Transverse colon (tissue), 4 donors: ENCODE measurements at regions of chrX and their contacts with region 1.

Region 1: DNA sequence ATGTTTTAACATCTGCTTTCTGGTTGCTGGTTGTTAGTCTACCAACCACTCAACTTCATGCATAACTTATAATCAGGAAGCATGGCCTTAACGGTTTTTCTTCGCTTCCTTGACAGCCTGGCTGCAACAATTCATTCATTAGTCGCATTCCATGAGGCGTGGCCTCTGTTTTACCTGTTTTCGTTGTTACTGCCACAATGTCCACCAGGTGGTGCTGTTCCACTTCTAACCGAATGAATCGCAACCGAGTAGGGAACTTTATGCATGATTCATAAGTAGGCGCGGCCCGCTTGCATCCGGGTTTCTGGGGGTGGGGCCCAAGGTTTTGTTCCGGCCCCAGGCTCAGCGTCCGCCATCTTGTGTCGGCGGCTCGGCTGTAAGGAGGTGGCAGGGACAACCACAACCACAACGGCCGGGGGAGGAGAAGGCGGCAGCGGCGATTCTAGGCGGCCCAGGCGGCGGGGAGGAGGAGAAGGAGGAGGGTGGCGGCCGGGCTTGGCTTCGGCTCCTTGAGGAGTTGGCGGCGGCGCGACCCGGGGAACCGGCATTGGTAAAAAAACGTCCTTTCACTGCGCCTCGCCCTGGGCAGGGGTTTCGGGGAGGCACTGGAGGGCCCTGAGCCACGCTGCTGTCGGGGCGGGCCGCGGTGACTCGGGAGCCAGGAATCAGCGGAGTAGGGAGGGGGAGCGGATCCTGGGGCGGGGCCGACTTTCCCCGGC is at the start of gene UBA1:
- DNase-seq: peak; percentile 98
- H3K4me3 ChIP-seq: peak within 1 kb of the TSS; percentile 80 to 90 (median 84)
- H3K27ac ChIP-seq: peak within 1 kb of the TSS; percentile 93 to 99 (median 96)
- H3K4me1 ChIP-seq: peaks cover 26 to 59% (median 34%) of the 10 kb centered on the region in 4 donors
- H3K27me3 ChIP-seq: no peaks in the 10 kb centered on the region
- CTCF ChIP-seq: peak; percentile 49 to 91 (median 86)
- EP300 ChIP-seq: no peak
- POLR2A ChIP-seq: peak; percentile 82
- total RNA-seq, gene UBA1: 145 to 182 (median 163) TPM

Region 2: DNA sequence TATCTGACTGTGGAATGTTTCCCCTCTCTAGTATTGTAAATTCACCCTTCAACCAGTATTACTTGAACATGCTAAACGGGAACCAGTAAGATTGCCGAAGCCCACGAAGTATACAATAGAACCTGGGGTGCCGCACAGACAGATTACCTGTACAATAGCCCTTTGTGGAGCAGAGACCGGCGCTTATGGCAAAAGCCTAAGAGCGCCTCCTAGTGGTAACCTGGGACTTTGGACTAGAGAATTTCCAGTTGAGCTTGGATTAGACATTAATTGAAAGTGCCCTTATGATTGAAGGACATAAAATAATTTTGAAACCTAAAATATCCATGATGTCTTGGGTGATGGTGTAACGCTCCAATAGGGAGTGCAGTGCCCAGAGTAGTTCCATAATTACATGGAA is 190.9 kb after region 1 on chrX:
- in situ Hi-C with region 1: loop called (anchors 10 to 25 kb)
- intact Hi-C with region 1: loop called (anchors 2 kb)
- DNase-seq: peak; percentile 73
- H3K4me3 ChIP-seq: no peak overlapping the region
- H3K27ac ChIP-seq: no peak overlapping the region
- H3K4me1 ChIP-seq: no peaks in the 10 kb centered on the region
- H3K27me3 ChIP-seq: no peaks in the 10 kb centered on the region
- CTCF ChIP-seq: peak; percentile 64 to 78 (median 70)
- EP300 ChIP-seq: no peak
- POLR2A ChIP-seq: no peak

Region 3: GRCh38 chrX:47523297-47523696 is 329.7 kb after region 1 on chrX:
- in situ Hi-C with region 1: loop called in 3 of 4 experiments (anchors 10 to 25 kb)
- intact Hi-C with region 1: no loop called
- DNase-seq: peak; percentile 88
- H3K4me3 ChIP-seq: peak overlapping the region; percentile 38 to 70 (median 50)
- H3K27ac ChIP-seq: peak overlapping the region in 1 of 4 donors; percentile 45
- H3K4me1 ChIP-seq: no peaks in the 10 kb centered on the region
- H3K27me3 ChIP-seq: no peaks in the 10 kb centered on the region
- CTCF ChIP-seq: peak; percentile 62 to 76 (median 70)
- EP300 ChIP-seq: no peak
- POLR2A ChIP-seq: no peak

Region 4: DNA sequence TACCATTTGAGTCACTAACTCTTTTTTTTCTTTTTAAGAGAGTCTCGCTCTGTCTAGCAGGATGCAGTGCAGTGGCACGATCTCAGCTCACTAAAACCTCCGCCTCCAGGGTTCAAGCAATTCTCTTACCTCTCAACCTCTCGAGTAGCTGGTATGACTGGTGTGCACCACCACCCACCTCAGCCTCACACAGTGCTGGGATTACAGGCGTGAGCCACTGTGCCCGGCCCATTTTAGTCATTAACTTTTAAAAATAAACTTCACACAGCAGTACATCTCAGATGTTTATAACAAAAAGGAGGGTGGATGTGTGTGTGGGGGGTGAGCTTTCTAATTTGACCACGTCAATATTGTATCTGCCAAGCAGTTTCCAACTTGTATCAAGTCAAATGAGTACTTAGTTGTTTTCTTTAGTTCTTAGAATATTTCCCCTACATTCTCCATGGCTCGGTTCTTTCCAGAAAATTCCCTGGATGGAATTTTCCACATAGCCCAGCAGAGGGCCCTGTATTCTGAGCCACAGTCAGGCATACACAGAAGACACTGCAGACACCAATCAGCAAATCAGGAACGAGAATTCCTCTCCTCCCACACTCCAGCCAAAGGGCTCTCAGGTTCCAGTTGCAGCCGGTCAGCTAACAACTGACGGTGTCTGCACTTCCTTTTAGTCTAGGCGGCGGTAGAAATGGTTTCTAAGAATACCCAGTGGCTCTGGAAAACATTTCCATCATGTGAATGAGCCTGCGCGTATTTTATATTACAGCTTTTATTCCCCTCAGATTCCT is 347.3 kb after region 1 on chrX:
- in situ Hi-C with region 1: no loop called
- intact Hi-C with region 1: no loop called
- DNase-seq: peak; percentile 77
- H3K4me3 ChIP-seq: no peak overlapping the region
- H3K27ac ChIP-seq: peak overlapping the region; percentile 64 to 79 (median 78)
- H3K4me1 ChIP-seq: peaks cover 0 to 11% (median 4%) of the 10 kb centered on the region in 4 donors
- H3K27me3 ChIP-seq: no peaks in the 10 kb centered on the region
- CTCF ChIP-seq: peak; percentile 48 to 69 (median 50)
- EP300 ChIP-seq: no peak
- POLR2A ChIP-seq: peak; percentile 32